ENCODE measurements at regions of chr11 and their contacts with region 1.

Region 1: GRCh38 chr11:75342903-75343870 is 8.3 kb downstream of the ARRB1 start:
- DNase-seq: peak; percentile 76 to 94
- ATAC-seq: peak; percentile 44 to 56; a peak in 5 of 6 replicates
- H3K4me3 ChIP-seq: no peak overlapping the region
- H3K27ac ChIP-seq: peak overlapping the region; percentile 76 to 80
- H3K4me1 ChIP-seq: peaks cover 81% of the 10 kb centered on the region
- CTCF ChIP-seq: no peak
- EP300 ChIP-seq: no peak
- POLR2A ChIP-seq: no peak
- RAD21 ChIP-seq: no peak

Region 2: GRCh38 chr11:75328426-75329277 is 14.5 kb before region 1 on chr11:
- CTCF ChIA-PET with region 1: interaction called, 53 read pairs
- POLR2A ChIA-PET with region 1: interaction called, 3 read pairs
- DNase-seq: peak; percentile 85 to 86
- ATAC-seq: peak; percentile 94 to 95
- H3K4me3 ChIP-seq: no peak overlapping the region
- H3K27ac ChIP-seq: peak overlapping the region; percentile 17 to 57; a peak in 5 of 6 replicates
- H3K4me1 ChIP-seq: peaks cover 62% of the 10 kb centered on the region
- CTCF ChIP-seq: peak; percentile 85
- EP300 ChIP-seq: no peak
- POLR2A ChIP-seq: no peak
- RAD21 ChIP-seq: peak; percentile 96 to 98

Measured in A549 (cell line).